Heart right ventricle (tissue), 16 donors: ENCODE measurements at regions of chr16 and their contacts with region 1.

Region 1: DNA sequence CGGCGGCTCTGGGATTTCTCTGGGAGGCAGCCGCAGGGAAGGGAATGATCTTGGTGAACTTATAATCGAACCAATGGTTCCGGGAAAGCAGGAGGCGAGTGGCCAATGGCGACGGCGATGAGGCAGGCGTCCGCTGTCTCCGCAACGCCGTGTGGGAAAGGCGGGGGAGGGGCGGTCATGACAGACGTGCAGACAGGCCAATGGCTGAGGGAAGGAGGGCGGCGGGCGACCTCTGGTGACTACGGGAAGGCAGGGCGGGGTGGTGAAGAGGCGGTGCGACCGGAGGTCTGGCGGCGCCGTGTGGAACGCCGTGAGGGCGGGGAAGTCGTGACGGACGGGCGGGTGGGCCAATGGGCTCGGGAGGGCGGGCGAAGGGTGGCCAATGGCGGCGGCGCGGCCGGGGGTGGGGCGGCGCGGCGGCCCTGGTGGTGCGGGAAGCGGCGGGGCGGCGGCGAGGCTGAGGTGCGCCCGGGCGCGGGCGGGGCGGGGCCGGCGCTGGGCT is at the start of gene RAB40C:
- DNase-seq: peak; percentile 99
- ATAC-seq: peak; percentile 90 to 98 (median 96)
- H3K4me3 ChIP-seq: peak within 1 kb of the TSS; percentile 81 to 97 (median 92)
- H3K27ac ChIP-seq: peak within 1 kb of the TSS; percentile 80 to 100 (median 99)
- H3K4me1 ChIP-seq: peaks cover 10 to 64% (median 42%) of the 10 kb centered on the region in 9 donors
- H3K27me3 ChIP-seq: no peaks in the 10 kb centered on the region
- CTCF ChIP-seq: peak in 4 of 9 donors; percentile 11 to 42 (median 26)
- total RNA-seq, gene RAB40C: 9.1 to 16.1 (median 12.1) TPM

Region 2: GRCh38 chr16:77807-78443 is 511.8 kb before region 1 on chr16 and contains the start of gene MPG:
- intact Hi-C with region 1: no loop called
- DNase-seq: peak; percentile 89 to 92
- ATAC-seq: peak; percentile 55 to 77 (median 67)
- H3K4me3 ChIP-seq: peak within 1 kb of the TSS; percentile 69 to 98 (median 82)
- H3K27ac ChIP-seq: peak within 1 kb of the TSS; percentile 94 to 99 (median 97)
- H3K4me1 ChIP-seq: peaks cover 38 to 66% (median 62%) of the 10 kb centered on the region in 9 donors
- H3K27me3 ChIP-seq: peaks cover 0 to 13% (median 0%) of the 10 kb centered on the region in 7 donors
- CTCF ChIP-seq: no peak
- total RNA-seq, gene MPG: 32.2 to 44.7 (median 38.6) TPM

Region 3: DNA sequence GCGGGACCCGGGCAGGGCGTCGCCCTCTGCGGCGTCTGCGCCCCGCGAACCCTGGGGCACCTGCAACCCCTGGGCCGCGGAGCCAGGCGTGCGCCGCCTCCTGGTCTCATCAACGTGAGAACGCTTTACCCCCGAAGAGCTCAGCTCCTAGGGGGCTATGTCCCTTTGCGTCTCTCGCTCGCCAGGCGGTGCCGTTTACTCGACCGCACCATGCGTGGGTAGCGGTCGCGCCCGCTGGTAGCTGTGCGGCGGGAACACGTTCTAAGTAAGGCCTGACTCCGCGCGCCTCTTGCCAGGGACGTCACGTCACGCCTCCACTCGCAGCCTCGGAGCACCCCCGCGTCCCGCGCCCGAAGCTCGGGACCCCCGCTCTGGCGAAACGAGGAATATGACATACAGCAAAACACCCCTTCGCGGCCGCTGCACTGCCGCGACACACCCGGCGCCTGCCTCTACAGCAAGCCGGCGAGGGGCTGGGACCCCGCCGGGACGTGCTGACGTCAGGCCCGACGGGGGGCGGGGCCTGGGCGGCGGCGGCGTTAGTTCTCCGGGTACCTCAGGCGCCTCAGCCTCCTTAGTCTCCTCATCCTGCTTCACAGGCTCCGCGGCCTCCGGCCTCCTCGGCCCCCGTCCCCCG is 164.5 kb before region 1 on chr16 and contains the start of gene RAB11FIP3:
- intact Hi-C with region 1: loop called in 1 of 10 experiments (anchors 10 kb)
- DNase-seq: peak; percentile 82 to 87
- ATAC-seq: peak; percentile 86 to 93 (median 88)
- H3K4me3 ChIP-seq: peak within 1 kb of the TSS; percentile 52 to 82 (median 74)
- H3K27ac ChIP-seq: peak within 1 kb of the TSS; percentile 66 to 99 (median 94)
- H3K4me1 ChIP-seq: peaks cover 0 to 54% (median 37%) of the 10 kb centered on the region in 9 donors
- H3K27me3 ChIP-seq: peaks cover 0 to 6% (median 0%) of the 10 kb centered on the region in 7 donors
- CTCF ChIP-seq: peak in 5 of 9 donors; percentile 18 to 52 (median 48)
- total RNA-seq, gene RAB11FIP3: 16.6 to 40.3 (median 30.4) TPM

Region 4: GRCh38 chr16:630815-631405 is 41.2 kb after region 1 on chr16 and contains the start of gene WFIKKN1:
- intact Hi-C with region 1: loop called in 4 of 10 experiments (anchors 2 to 5 kb)
- DNase-seq: no peak
- ATAC-seq: peak in 1 of 8 donors; percentile 2
- H3K4me3 ChIP-seq: no peak within 1 kb of the TSS
- H3K27ac ChIP-seq: peak within 1 kb of the TSS in 4 of 10 donors; percentile 1 to 31 (median 12)
- H3K4me1 ChIP-seq: peaks cover 22 to 40% (median 34%) of the 10 kb centered on the region in 9 donors
- H3K27me3 ChIP-seq: no peaks in the 10 kb centered on the region
- CTCF ChIP-seq: no peak
- total RNA-seq, gene WFIKKN1: 0.11 to 0.80 (median 0.27) TPM

Region 5: GRCh38 chr16:649624-650023 is 59.9 kb after region 1 on chr16:
- intact Hi-C with region 1: loop called in 1 of 10 experiments (anchors 10 kb)
- DNase-seq: no peak
- ATAC-seq: peak in 3 of 8 donors; percentile 0 to 1 (median 1)
- H3K4me3 ChIP-seq: peak overlapping the region; percentile 65 to 85 (median 74)
- H3K27ac ChIP-seq: peak overlapping the region in 9 of 10 donors; percentile 80 to 96 (median 89)
- H3K4me1 ChIP-seq: peaks cover 31 to 55% (median 47%) of the 10 kb centered on the region in 9 donors
- H3K27me3 ChIP-seq: no peaks in the 10 kb centered on the region
- CTCF ChIP-seq: no peak

Region 6: GRCh38 chr16:667780-668518 is 78.2 kb after region 1 on chr16 and contains the start of gene RHOT2:
- intact Hi-C with region 1: loop called in 6 of 10 experiments (anchors 5 to 10 kb)
- DNase-seq: peak; percentile 93 to 94
- ATAC-seq: peak; percentile 87 to 95 (median 92)
- H3K4me3 ChIP-seq: peak within 1 kb of the TSS; percentile 84 to 100 (median 96)
- H3K27ac ChIP-seq: peak within 1 kb of the TSS; percentile 81 to 98 (median 91)
- H3K4me1 ChIP-seq: peaks cover 6 to 23% (median 17%) of the 10 kb centered on the region in 9 donors
- H3K27me3 ChIP-seq: no peaks in the 10 kb centered on the region
- CTCF ChIP-seq: peak; percentile 81 to 98 (median 93)
- total RNA-seq, gene RHOT2: 66.8 to 118 (median 89.2) TPM